ENCODE measurements at regions of chr7 and their contacts with region 1.

Region 1: GRCh38 chr7:78020136-78020873 is 221.7 kb downstream of the PHTF2 start:
- DNase-seq: peak in 6 of 9 experiments; percentile 18 to 67 (median 42)
- ATAC-seq: peak; percentile 48
- H3K4me3 ChIP-seq: peak overlapping the region; percentile 41 to 64
- H3K4me3 Mint-ChIP-seq: peak overlapping the region; percentile 80
- H3K27ac ChIP-seq: peak overlapping the region in 1 of 2 experiments; percentile 49
- H3K27ac Mint-ChIP-seq: peak overlapping the region; percentile 47
- H3K4me1 ChIP-seq: peaks cover 5% of the 10 kb centered on the region
- H3K4me1 Mint-ChIP-seq: peaks cover 8% of the 10 kb centered on the region
- H3K27me3 ChIP-seq: no peaks in the 10 kb centered on the region
- H3K27me3 Mint-ChIP-seq: peaks cover 26% of the 10 kb centered on the region
- CTCF ChIP-seq: peak; percentile 61

Region 2: GRCh38 chr7:77913977-77914607 is 106.2 kb before region 1 on chr7:
- CTCF ChIA-PET with region 1: no interaction called
- POLR2A ChIA-PET with region 1: no interaction called
- intact Hi-C with region 1: no loop called
- DNase-seq: no peak
- ATAC-seq: no peak
- H3K4me3 ChIP-seq: no peak overlapping the region
- H3K4me3 Mint-ChIP-seq: no peak overlapping the region
- H3K27ac ChIP-seq: no peak overlapping the region
- H3K27ac Mint-ChIP-seq: no peak overlapping the region
- H3K4me1 ChIP-seq: no peaks in the 10 kb centered on the region
- H3K4me1 Mint-ChIP-seq: no peaks in the 10 kb centered on the region
- H3K27me3 ChIP-seq: no peaks in the 10 kb centered on the region
- H3K27me3 Mint-ChIP-seq: no peaks in the 10 kb centered on the region
- CTCF ChIP-seq: no peak

Region 3: GRCh38 chr7:77989981-77990566 is 30.2 kb before region 1 on chr7:
- CTCF ChIA-PET with region 1: no interaction called
- POLR2A ChIA-PET with region 1: no interaction called
- intact Hi-C with region 1: no loop called
- DNase-seq: peak in 2 of 9 experiments; percentile 7 to 11
- ATAC-seq: no peak
- H3K4me3 ChIP-seq: no peak overlapping the region
- H3K4me3 Mint-ChIP-seq: no peak overlapping the region
- H3K27ac ChIP-seq: no peak overlapping the region
- H3K27ac Mint-ChIP-seq: no peak overlapping the region
- H3K4me1 ChIP-seq: no peaks in the 10 kb centered on the region
- H3K4me1 Mint-ChIP-seq: no peaks in the 10 kb centered on the region
- H3K27me3 ChIP-seq: no peaks in the 10 kb centered on the region
- H3K27me3 Mint-ChIP-seq: peaks cover 15% of the 10 kb centered on the region
- CTCF ChIP-seq: no peak

Region 4: DNA sequence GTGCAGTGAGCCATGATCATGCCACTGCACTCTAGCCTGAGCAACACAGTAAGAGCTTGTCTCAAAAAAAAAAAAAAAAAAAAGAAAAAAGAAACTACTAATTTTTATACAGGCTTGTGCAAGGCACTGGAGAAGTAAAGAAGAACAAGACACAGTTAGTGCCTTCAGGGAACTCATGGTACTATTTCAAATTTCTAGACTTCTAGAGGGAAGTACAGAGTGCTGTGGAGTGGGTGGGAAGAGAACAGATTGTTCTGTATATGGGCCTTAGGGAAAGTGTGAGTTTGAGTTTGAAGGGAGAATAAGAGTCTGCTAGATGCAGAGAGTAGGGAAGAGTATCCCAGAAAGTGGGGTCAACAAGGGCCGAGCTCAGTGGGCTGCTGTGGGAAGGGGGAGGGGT is 13.1 kb after region 1 on chr7:
- CTCF ChIA-PET with region 1: interaction called, 77 read pairs
- POLR2A ChIA-PET with region 1: interaction called, 5 read pairs
- intact Hi-C with region 1: loop called in 1 of 2 experiments (anchors 2 kb)
- DNase-seq: no peak
- ATAC-seq: no peak
- H3K4me3 ChIP-seq: no peak overlapping the region
- H3K4me3 Mint-ChIP-seq: no peak overlapping the region
- H3K27ac ChIP-seq: no peak overlapping the region
- H3K27ac Mint-ChIP-seq: no peak overlapping the region
- H3K4me1 ChIP-seq: no peaks in the 10 kb centered on the region
- H3K4me1 Mint-ChIP-seq: no peaks in the 10 kb centered on the region
- H3K27me3 ChIP-seq: no peaks in the 10 kb centered on the region
- H3K27me3 Mint-ChIP-seq: peaks cover 28% of the 10 kb centered on the region
- CTCF ChIP-seq: no peak